ENCODE measurements at regions of chr15 and their contacts with region 1.

Region 1: GRCh38 chr15:65384895-65385858 is 7.4 kb upstream of the IGDCC3 start:
- DNase-seq: peak; percentile 82
- H3K4me3 ChIP-seq: no peak overlapping the region
- H3K27ac ChIP-seq: no peak overlapping the region
- H3K4me1 ChIP-seq: peaks cover 6% of the 10 kb centered on the region
- H3K27me3 ChIP-seq: peaks cover 8 to 13% of the 10 kb centered on the region in 2 experiments
- CTCF ChIP-seq: peak; percentile 96
- POLR2A ChIP-seq: no peak

Region 2: DNA sequence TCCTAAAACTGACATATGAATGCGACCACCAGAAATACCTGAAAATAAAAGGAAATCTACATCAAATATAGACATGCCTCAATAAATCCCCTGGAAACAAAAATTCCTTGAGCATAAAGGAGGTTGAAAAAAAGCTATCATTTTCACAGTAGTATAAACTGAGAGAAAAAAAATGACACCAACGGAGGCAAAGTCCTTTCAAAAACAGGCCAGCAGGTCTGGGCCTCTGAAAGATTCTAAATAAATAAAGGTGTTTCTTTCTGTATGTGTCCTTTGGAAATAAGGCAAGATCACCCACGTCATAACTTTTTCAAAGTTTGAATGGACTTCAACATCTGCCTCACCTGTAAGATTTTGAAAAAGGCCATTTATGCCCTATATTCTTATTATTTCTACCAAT is 205.0 kb before region 1 on chr15:
- CTCF ChIA-PET with region 1: no interaction called
- POLR2A ChIA-PET with region 1: no interaction called
- dilution Hi-C with region 1: no loop called
- intact Hi-C with region 1: no loop called
- DNase-seq: no peak
- H3K4me3 ChIP-seq: no peak overlapping the region
- H3K27ac ChIP-seq: no peak overlapping the region
- H3K4me1 ChIP-seq: peaks cover 6% of the 10 kb centered on the region
- H3K27me3 ChIP-seq: no peaks in the 10 kb centered on the region
- CTCF ChIP-seq: no peak
- POLR2A ChIP-seq: no peak

Region 3: DNA sequence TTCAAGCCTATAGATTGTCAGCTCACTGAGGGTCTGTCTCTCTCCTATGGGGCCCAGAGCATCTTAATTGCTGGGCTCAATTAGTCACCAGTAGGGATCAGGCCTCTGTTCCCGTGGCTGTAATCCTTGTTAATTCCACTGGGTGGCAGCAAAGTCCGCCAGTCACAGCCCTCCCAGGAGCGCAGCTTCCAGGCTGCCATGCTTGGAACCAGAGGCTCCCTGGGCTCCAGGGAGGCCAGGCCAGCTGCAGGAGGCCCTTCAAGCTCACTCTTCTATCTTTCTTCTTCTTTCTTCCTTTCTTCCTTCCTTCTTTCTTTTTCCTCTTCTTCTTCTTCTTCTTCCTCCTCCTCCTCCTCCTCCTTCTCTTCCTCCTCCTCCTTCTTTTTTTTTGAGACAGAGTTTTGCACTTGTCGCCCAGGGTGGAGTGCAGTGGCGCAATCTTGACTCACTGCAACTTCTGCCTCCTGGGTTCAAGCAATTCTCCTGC is 66.3 kb before region 1 on chr15:
- CTCF ChIA-PET with region 1: interaction called, 274 read pairs
- POLR2A ChIA-PET with region 1: interaction called, 4 read pairs
- dilution Hi-C with region 1: no loop called
- intact Hi-C with region 1: loop called (anchors 1 kb)
- DNase-seq: peak; percentile 79
- H3K4me3 ChIP-seq: no peak overlapping the region
- H3K27ac ChIP-seq: no peak overlapping the region
- H3K4me1 ChIP-seq: no peaks in the 10 kb centered on the region
- H3K27me3 ChIP-seq: peaks cover 0 to 10% of the 10 kb centered on the region in 2 experiments
- CTCF ChIP-seq: peak; percentile 75 to 87
- POLR2A ChIP-seq: no peak

Region 4: GRCh38 chr15:65326117-65326526 is 59.1 kb before region 1 on chr15:
- CTCF ChIA-PET with region 1: interaction called, 274 read pairs
- POLR2A ChIA-PET with region 1: no interaction called
- dilution Hi-C with region 1: no loop called
- intact Hi-C with region 1: no loop called
- DNase-seq: peak; percentile 92
- H3K4me3 ChIP-seq: no peak overlapping the region
- H3K27ac ChIP-seq: no peak overlapping the region
- H3K4me1 ChIP-seq: peaks cover 3% of the 10 kb centered on the region
- H3K27me3 ChIP-seq: peaks cover 0 to 7% of the 10 kb centered on the region in 2 experiments
- CTCF ChIP-seq: no peak
- POLR2A ChIP-seq: no peak

Region 5: GRCh38 chr15:66008940-66009562 is 623.9 kb after region 1 on chr15:
- CTCF ChIA-PET with region 1: no interaction called
- POLR2A ChIA-PET with region 1: no interaction called
- dilution Hi-C with region 1: no loop called
- intact Hi-C with region 1: no loop called
- DNase-seq: no peak
- H3K4me3 ChIP-seq: no peak overlapping the region
- H3K27ac ChIP-seq: no peak overlapping the region
- H3K4me1 ChIP-seq: no peaks in the 10 kb centered on the region
- H3K27me3 ChIP-seq: no peaks in the 10 kb centered on the region
- CTCF ChIP-seq: no peak
- POLR2A ChIP-seq: no peak

Measured in endothelial cell of umbilical vein (primary cell).